ENCODE measurements at regions of chr1 and their contacts with region 1.

Region 1: GRCh38 chr1:84772428-84772943 is 82.2 kb upstream of the SSX2IP start:
- DNase-seq: peak; percentile 86 to 89
- ATAC-seq: peak; percentile 86
- H3K4me3 ChIP-seq: no peak overlapping the region
- H3K27ac ChIP-seq: no peak overlapping the region
- H3K4me1 ChIP-seq: no peaks in the 10 kb centered on the region
- H3K27me3 ChIP-seq: no peaks in the 10 kb centered on the region

Region 2: GRCh38 chr1:84156210-84156621 is 616.3 kb before region 1 on chr1:
- intact Hi-C with region 1: loop called in 1 of 2 experiments (anchors 10 kb)
- DNase-seq: no peak
- ATAC-seq: no peak
- H3K4me3 ChIP-seq: no peak overlapping the region
- H3K27ac ChIP-seq: peak overlapping the region in 1 of 2 donors; percentile 14
- H3K4me1 ChIP-seq: peaks cover 0 to 5% of the 10 kb centered on the region in 2 donors
- H3K27me3 ChIP-seq: no peaks in the 10 kb centered on the region

Region 3: GRCh38 chr1:84442256-84442655 is 330.2 kb before region 1 on chr1:
- intact Hi-C with region 1: loop called in 1 of 2 experiments (anchors 5 kb)
- DNase-seq: no peak
- ATAC-seq: peak; percentile 81
- H3K4me3 ChIP-seq: no peak overlapping the region
- H3K27ac ChIP-seq: no peak overlapping the region
- H3K4me1 ChIP-seq: no peaks in the 10 kb centered on the region
- H3K27me3 ChIP-seq: no peaks in the 10 kb centered on the region

Region 4: DNA sequence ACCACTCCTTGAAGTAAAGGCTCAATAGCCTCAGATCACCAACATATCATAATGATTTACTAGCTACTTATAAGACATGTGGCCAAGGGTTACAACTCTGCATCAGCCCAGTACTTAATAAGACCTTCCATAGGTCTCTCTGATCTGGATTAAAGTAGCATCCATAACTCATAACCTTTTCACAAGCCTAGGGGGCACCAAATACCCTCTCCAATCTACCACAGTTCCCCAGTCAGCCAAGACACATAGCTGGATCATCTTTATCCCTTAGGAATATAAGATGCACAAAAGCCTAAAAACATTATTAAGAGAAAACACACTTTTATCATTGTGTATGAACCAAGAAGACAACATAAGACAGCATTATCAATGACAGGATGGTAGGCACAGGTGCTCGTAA is 104.3 kb before region 1 on chr1:
- intact Hi-C with region 1: loop called in 1 of 2 experiments (anchors 5 kb)
- DNase-seq: no peak
- ATAC-seq: no peak
- H3K4me3 ChIP-seq: no peak overlapping the region
- H3K27ac ChIP-seq: no peak overlapping the region
- H3K4me1 ChIP-seq: no peaks in the 10 kb centered on the region
- H3K27me3 ChIP-seq: no peaks in the 10 kb centered on the region

Region 5: GRCh38 chr1:84936116-84936810 is 163.8 kb after region 1 on chr1:
- intact Hi-C with region 1: loop called in 1 of 2 experiments (anchors 5 kb)
- DNase-seq: no peak
- ATAC-seq: peak; percentile 88
- H3K4me3 ChIP-seq: peak overlapping the region in 1 of 2 donors; percentile 12
- H3K27ac ChIP-seq: no peak overlapping the region
- H3K4me1 ChIP-seq: no peaks in the 10 kb centered on the region
- H3K27me3 ChIP-seq: no peaks in the 10 kb centered on the region

Measured in aorta (tissue), 5 donors.